Transverse colon (tissue), 4 donors: ENCODE measurements at regions of chr9 and their contacts with region 1.

Region 1: GRCh38 chr9:122475717-122476116 is 2.0 kb downstream of the OR1J1 start:
- DNase-seq: no peak
- H3K4me3 ChIP-seq: no peak overlapping the region
- H3K27ac ChIP-seq: no peak overlapping the region
- H3K4me1 ChIP-seq: no peaks in the 10 kb centered on the region
- H3K27me3 ChIP-seq: no peaks in the 10 kb centered on the region
- CTCF ChIP-seq: no peak
- EP300 ChIP-seq: no peak
- POLR2A ChIP-seq: no peak

Region 2: GRCh38 chr9:122402403-122402871 is 73.3 kb before region 1 on chr9:
- in situ Hi-C with region 1: no loop called
- intact Hi-C with region 1: no loop called
- DNase-seq: no peak
- H3K4me3 ChIP-seq: no peak overlapping the region
- H3K27ac ChIP-seq: no peak overlapping the region
- H3K4me1 ChIP-seq: peaks cover 0 to 5% (median 0%) of the 10 kb centered on the region in 4 donors
- H3K27me3 ChIP-seq: no peaks in the 10 kb centered on the region
- CTCF ChIP-seq: no peak
- EP300 ChIP-seq: no peak
- POLR2A ChIP-seq: no peak

Region 3: DNA sequence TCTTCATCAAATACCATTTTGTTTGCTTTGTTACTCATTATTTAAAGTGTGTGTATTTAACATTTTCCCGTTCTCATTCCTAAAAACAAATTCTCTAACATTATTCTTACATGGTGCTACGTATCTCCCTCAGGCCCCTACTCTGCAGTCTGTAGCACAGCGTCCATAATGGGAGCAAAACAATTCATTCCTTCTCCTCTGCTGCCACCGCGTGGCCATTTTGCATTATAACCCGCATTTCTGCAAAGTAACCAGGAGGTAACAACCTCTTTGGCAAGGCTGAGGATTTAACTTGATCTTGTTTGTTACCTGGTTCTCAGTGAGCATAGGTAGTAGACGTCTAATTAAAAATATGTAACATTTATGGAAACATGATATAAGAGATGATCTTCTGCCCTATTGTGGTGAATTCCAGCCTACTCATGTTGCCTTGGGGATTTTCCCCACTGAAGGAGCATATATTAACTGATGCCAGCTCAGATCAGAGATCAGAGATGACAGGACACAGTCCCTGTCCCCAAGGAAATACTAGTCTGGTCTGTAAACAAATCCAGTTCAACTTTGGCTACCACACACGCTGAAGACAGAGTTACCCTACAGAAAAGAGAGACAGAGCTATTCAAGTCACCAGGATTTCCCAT is 334.7 kb after region 1 on chr9:
- in situ Hi-C with region 1: no loop called
- intact Hi-C with region 1: loop called (anchors 1 kb)
- DNase-seq: peak; percentile 80
- H3K4me3 ChIP-seq: no peak overlapping the region
- H3K27ac ChIP-seq: no peak overlapping the region
- H3K4me1 ChIP-seq: peaks cover 0 to 7% (median 0%) of the 10 kb centered on the region in 4 donors
- H3K27me3 ChIP-seq: no peaks in the 10 kb centered on the region
- CTCF ChIP-seq: peak; percentile 72 to 83 (median 74)
- EP300 ChIP-seq: no peak
- POLR2A ChIP-seq: no peak